SK-N-SH (cell line): ENCODE measurements at regions of chr5 and their contacts with region 1.

Region 1: GRCh38 chr5:82351754-82352145 is 73.6 kb upstream of the RPS23 start:
- DNase-seq: peak; percentile 63
- H3K4me3 ChIP-seq: no peak overlapping the region; a peak in 1 of 4 replicates
- H3K27ac ChIP-seq: peak overlapping the region in 1 of 2 experiments; percentile 31; a peak in 2 of 4 replicates
- H3K4me1 ChIP-seq: peaks cover 5 to 18% of the 10 kb centered on the region in 2 experiments; a peak in 1 of 4 replicates
- H3K27me3 ChIP-seq: no peaks in the 10 kb centered on the region
- CTCF ChIP-seq: peak; percentile 84
- EP300 ChIP-seq: no peak
- RAD21 ChIP-seq: peak; percentile 96

Region 2: DNA sequence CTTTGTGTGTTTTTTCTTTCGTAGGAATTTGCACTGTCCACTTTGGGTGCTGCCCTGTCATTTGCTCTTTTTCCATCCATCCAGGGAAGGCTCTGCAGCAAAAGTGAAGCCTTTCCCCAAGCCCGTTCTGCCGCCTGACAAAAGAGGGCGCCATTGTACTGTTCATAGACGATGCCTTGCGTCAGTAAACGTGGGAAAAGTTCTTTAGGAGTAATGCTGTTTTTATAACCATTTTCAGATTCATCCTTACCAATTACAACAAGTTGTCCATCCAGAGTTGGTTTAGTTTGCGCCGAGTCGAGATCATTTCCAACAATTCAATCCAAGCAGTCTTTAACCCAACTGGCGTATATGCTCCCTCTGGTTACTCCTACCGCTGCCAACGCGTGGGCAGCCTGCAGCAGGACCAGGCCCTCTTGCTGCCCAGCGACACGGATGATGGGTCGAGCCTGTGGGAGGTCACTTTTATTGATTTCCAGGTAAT is 39.3 kb before region 1 on chr5:
- CTCF ChIA-PET with region 1: interaction called, 35 read pairs
- POLR2A ChIA-PET with region 1: no interaction called
- DNase-seq: peak; percentile 60
- H3K4me3 ChIP-seq: no peak overlapping the region; a peak in 1 of 4 replicates
- H3K27ac ChIP-seq: peak overlapping the region; percentile 55 to 66; a peak in 3 of 4 replicates
- H3K4me1 ChIP-seq: peaks cover 8% of the 10 kb centered on the region in 2 experiments; a peak in 3 of 4 replicates
- H3K27me3 ChIP-seq: no peaks in the 10 kb centered on the region
- CTCF ChIP-seq: peak; percentile 98
- EP300 ChIP-seq: no peak
- RAD21 ChIP-seq: peak; percentile 96

Region 3: GRCh38 chr5:82334856-82335255 is 16.9 kb before region 1 on chr5:
- CTCF ChIA-PET with region 1: interaction called, 10 read pairs
- POLR2A ChIA-PET with region 1: no interaction called
- DNase-seq: no peak
- H3K4me3 ChIP-seq: no peak overlapping the region
- H3K27ac ChIP-seq: peak overlapping the region; percentile 95 to 100; a peak in 3 of 4 replicates
- H3K4me1 ChIP-seq: peaks cover 20 to 37% of the 10 kb centered on the region in 2 experiments
- H3K27me3 ChIP-seq: no peaks in the 10 kb centered on the region
- CTCF ChIP-seq: no peak
- EP300 ChIP-seq: peak in 1 of 2 experiments; percentile 93; a peak in 2 of 4 replicates
- RAD21 ChIP-seq: no peak

Region 4: DNA sequence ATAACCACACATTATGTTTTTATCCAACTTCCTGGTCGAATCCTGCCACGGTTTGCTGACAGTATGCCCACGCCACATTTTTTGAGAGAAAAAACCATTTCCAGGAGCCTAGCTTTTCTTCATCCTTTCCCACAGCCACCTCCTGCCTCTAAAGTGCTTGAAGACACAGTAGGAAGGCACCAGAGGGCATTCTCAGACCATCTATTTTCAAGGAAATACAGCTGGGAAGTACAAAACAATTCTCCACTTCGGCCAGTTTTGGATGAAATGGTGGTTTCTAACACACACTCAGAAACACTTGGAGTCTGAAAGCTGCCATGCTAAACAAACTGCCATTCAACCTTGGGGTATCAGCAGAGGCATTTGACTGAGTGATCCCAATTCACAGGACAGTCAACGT is 12.7 kb after region 1 on chr5:
- CTCF ChIA-PET with region 1: interaction called, 17 read pairs
- POLR2A ChIA-PET with region 1: no interaction called
- DNase-seq: peak; percentile 33
- H3K4me3 ChIP-seq: no peak overlapping the region
- H3K27ac ChIP-seq: no peak overlapping the region
- H3K4me1 ChIP-seq: no peaks in the 10 kb centered on the region; a peak in 1 of 4 replicates
- H3K27me3 ChIP-seq: no peaks in the 10 kb centered on the region
- CTCF ChIP-seq: peak; percentile 59
- EP300 ChIP-seq: no peak
- RAD21 ChIP-seq: peak; percentile 82

Region 5: GRCh38 chr5:82425591-82425990 is 73.8 kb after region 1 on chr5:
- CTCF ChIA-PET with region 1: no interaction called
- POLR2A ChIA-PET with region 1: no interaction called
- DNase-seq: no peak
- H3K4me3 ChIP-seq: no peak overlapping the region
- H3K27ac ChIP-seq: no peak overlapping the region
- H3K4me1 ChIP-seq: peaks cover 0 to 6% of the 10 kb centered on the region in 2 experiments; a peak in 1 of 4 replicates
- H3K27me3 ChIP-seq: no peaks in the 10 kb centered on the region
- CTCF ChIP-seq: no peak
- EP300 ChIP-seq: no peak
- RAD21 ChIP-seq: no peak

Region 6: GRCh38 chr5:82641331-82642003 is 289.7 kb after region 1 on chr5:
- CTCF ChIA-PET with region 1: interaction called, 12 read pairs
- POLR2A ChIA-PET with region 1: no interaction called
- DNase-seq: peak; percentile 64
- H3K4me3 ChIP-seq: no peak overlapping the region
- H3K27ac ChIP-seq: peak overlapping the region in 1 of 2 experiments; percentile 86; a peak in 3 of 4 replicates
- H3K4me1 ChIP-seq: peaks cover 0 to 15% of the 10 kb centered on the region in 2 experiments; a peak in 2 of 4 replicates
- H3K27me3 ChIP-seq: no peaks in the 10 kb centered on the region
- CTCF ChIP-seq: peak; percentile 78
- EP300 ChIP-seq: peak in 1 of 2 experiments; percentile 46; a peak in 1 of 4 replicates
- RAD21 ChIP-seq: peak; percentile 97

Region 7: GRCh38 chr5:83473346-83474163 is 1121.8 kb after region 1 on chr5:
- CTCF ChIA-PET with region 1: interaction called, 27 read pairs
- POLR2A ChIA-PET with region 1: no interaction called
- DNase-seq: peak; percentile 85
- H3K4me3 ChIP-seq: peak overlapping the region; percentile 67 to 95
- H3K27ac ChIP-seq: peak overlapping the region; percentile 92 to 93
- H3K4me1 ChIP-seq: peaks cover 8% of the 10 kb centered on the region in 2 experiments; a peak in 3 of 4 replicates
- H3K27me3 ChIP-seq: no peaks in the 10 kb centered on the region
- CTCF ChIP-seq: peak; percentile 96
- EP300 ChIP-seq: peak in 1 of 2 experiments; percentile 28; a peak in 1 of 4 replicates
- RAD21 ChIP-seq: peak; percentile 86

Region 8: DNA sequence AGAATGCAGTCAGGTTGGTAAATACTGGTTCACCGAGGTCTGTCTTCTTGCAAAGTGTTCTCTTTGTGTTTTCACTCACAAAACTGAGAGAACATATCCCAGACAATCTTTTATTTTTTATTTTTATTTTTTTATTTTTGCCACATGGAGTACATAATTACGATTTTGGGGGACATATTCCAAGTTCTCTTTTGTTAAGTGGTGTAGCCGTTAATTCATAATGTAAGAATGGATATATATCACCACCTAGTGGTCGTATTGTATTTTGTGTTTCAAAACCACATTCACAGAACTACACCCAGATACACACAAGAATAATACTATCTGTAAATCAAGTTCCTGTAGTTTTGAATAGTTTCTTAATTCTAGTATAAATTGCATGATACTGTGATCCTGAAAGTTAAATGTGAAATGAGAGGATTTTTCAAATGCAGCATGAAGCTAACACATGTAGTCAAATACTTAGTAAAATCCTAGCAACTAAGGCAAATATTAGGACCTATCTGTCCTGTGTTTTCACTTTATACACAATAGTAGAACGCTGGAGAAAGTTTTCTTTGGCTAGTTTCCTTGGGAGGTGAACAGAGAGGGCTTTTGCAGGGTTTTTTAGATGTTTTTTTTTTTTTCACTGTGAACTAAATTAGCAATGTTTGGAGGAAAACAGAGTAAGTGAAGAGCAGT is 1212.5 kb after region 1 on chr5:
- CTCF ChIA-PET with region 1: interaction called, 51 read pairs
- POLR2A ChIA-PET with region 1: no interaction called
- DNase-seq: peak; percentile 13
- H3K4me3 ChIP-seq: no peak overlapping the region; a peak in 1 of 4 replicates
- H3K27ac ChIP-seq: peak overlapping the region; percentile 14 to 16; a peak in 1 of 4 replicates
- H3K4me1 ChIP-seq: peaks cover 10 to 12% of the 10 kb centered on the region in 2 experiments; a peak in 3 of 4 replicates
- H3K27me3 ChIP-seq: no peaks in the 10 kb centered on the region
- CTCF ChIP-seq: peak; percentile 78
- EP300 ChIP-seq: no peak
- RAD21 ChIP-seq: peak; percentile 83